Heart left ventricle (tissue), 16 donors: ENCODE measurements at regions of chr1 and their contacts with region 1.

Region 1: DNA sequence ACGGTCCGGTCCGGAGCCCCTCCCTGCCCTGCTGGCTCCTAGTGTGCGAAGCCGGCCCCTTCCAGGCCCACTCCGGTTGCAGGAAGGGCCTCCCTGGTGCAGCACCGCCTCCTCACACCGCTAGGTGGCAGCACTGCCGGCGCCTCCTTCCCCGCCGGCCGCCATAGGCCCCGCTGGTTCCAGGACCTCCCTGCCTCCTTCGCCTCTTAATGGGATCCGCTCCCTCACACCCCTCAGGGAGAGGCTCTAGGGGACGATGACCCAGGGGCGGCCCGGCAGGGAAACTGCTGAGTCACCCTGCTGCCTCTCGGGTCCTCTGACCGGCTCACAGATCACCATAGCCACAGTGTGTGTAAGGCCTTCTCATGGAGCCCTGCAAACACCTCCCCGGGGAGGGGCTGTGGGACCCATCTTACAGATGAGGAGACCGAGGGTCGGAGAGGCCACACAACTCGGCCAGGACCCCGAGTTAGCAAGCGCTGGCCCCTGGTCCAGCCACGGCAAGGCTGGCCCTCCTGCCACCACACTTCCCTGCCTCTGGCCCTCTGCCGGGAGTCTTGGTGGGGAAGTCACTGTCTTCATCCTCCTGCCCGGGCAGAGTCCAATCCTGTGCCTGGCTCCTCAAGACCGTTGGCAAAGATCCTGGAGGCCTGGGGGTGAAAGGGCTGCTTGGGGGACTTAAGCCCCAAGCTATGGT is 1.6 kb upstream of the AJAP1 start:
- DNase-seq: peak; percentile 33 to 80 (median 44)
- ATAC-seq: peak in 3 of 4 donors; percentile 78 to 81 (median 80)
- H3K4me3 ChIP-seq: no peak overlapping the region
- H3K27ac ChIP-seq: no peak overlapping the region
- H3K4me1 ChIP-seq: peaks cover 0 to 31% (median 5%) of the 10 kb centered on the region in 12 donors
- H3K27me3 ChIP-seq: peaks cover 22 to 92% (median 44%) of the 10 kb centered on the region in 9 donors
- CTCF ChIP-seq: peak; percentile 87 to 98 (median 96)
- POLR2A ChIP-seq: no peak

Region 2: GRCh38 chr1:3910857-3911845 is 741.6 kb before region 1 on chr1:
- intact Hi-C with region 1: loop called in 3 of 10 experiments (anchors 5 to 10 kb)
- DNase-seq: peak in 4 of 5 donors; percentile 62 to 83 (median 64)
- ATAC-seq: peak in 3 of 4 donors; percentile 66 to 83 (median 77)
- H3K4me3 ChIP-seq: no peak overlapping the region
- H3K27ac ChIP-seq: no peak overlapping the region
- H3K4me1 ChIP-seq: peaks cover 0 to 7% (median 0%) of the 10 kb centered on the region in 12 donors
- H3K27me3 ChIP-seq: peaks cover 0 to 46% (median 15%) of the 10 kb centered on the region in 9 donors
- CTCF ChIP-seq: peak; percentile 44 to 76 (median 62)
- POLR2A ChIP-seq: no peak

Region 3: GRCh38 chr1:4494558-4494957 is 158.2 kb before region 1 on chr1:
- intact Hi-C with region 1: loop called in 1 of 10 experiments (anchors 10 kb)
- DNase-seq: peak in 1 of 5 donors; percentile 47
- ATAC-seq: peak; percentile 32 to 78 (median 72)
- H3K4me3 ChIP-seq: no peak overlapping the region
- H3K27ac ChIP-seq: no peak overlapping the region
- H3K4me1 ChIP-seq: no peaks in the 10 kb centered on the region
- H3K27me3 ChIP-seq: peaks cover 0 to 20% (median 0%) of the 10 kb centered on the region in 9 donors
- CTCF ChIP-seq: peak in 10 of 12 donors; percentile 12 to 50 (median 31)
- POLR2A ChIP-seq: no peak

Region 4: GRCh38 chr1:5514519-5515183 is 861.9 kb after region 1 on chr1:
- intact Hi-C with region 1: loop called in 1 of 10 experiments (anchors 10 kb)
- DNase-seq: peak; percentile 45 to 82 (median 56)
- ATAC-seq: peak in 3 of 4 donors; percentile 64 to 73 (median 64)
- H3K4me3 ChIP-seq: no peak overlapping the region
- H3K27ac ChIP-seq: no peak overlapping the region
- H3K4me1 ChIP-seq: no peaks in the 10 kb centered on the region
- H3K27me3 ChIP-seq: peaks cover 0 to 38% (median 7%) of the 10 kb centered on the region in 9 donors
- CTCF ChIP-seq: peak; percentile 99 to 100 (median 100)
- POLR2A ChIP-seq: no peak

Region 5: DNA sequence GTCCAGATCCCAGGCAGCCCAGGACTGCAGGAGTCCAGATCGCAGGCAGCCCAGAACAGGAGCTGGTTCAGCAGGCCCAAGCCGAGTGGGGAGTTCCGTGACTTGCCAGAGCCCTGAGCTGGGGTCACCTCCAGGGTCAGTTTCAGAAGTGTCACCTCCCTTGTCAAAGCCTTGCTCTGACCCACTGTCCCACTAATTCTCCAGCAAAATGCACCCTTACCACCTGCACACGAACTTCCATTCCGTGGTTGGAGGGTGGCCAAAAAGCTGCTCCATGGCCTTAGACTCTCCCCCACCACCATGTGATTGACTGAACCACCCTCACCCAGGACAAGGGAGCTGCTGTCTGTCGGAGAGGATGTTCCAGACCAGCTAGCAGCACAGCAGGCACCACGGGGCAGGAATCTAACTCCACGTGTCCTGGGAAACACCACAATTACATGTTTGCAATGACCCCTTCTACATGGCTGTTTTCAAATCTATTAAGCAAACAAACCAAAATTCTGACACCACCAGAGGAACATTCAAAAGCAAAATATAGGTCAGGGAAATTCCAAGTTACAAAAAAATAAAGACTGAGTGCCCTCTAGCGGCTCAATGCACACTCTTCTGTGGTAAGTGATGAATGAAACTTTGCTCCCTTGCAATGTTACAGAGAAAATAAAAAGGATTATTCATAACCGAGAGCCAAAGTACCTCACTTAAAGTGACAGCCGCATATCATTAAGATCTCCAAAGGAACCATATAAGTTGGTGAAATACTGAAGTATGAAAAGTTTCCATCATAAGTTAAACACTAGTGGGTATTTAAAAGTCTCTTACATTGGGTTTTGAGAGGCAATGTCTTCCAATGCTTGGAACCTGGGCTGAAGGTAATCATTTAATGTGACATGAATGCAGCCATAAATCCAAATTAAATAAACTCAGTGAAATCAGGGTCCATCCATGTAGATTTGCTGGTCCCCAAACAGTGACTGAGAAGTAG is 1263.1 kb after region 1 on chr1:
- intact Hi-C with region 1: loop called in 2 of 10 experiments (anchors 5 to 10 kb)
- DNase-seq: no peak
- ATAC-seq: peak in 3 of 4 donors; percentile 39 to 52 (median 46)
- H3K4me3 ChIP-seq: no peak overlapping the region
- H3K27ac ChIP-seq: no peak overlapping the region
- H3K4me1 ChIP-seq: peaks cover 0 to 6% (median 0%) of the 10 kb centered on the region in 12 donors
- H3K27me3 ChIP-seq: no peaks in the 10 kb centered on the region
- CTCF ChIP-seq: peak; percentile 37 to 76 (median 56)
- POLR2A ChIP-seq: no peak

Region 6: DNA sequence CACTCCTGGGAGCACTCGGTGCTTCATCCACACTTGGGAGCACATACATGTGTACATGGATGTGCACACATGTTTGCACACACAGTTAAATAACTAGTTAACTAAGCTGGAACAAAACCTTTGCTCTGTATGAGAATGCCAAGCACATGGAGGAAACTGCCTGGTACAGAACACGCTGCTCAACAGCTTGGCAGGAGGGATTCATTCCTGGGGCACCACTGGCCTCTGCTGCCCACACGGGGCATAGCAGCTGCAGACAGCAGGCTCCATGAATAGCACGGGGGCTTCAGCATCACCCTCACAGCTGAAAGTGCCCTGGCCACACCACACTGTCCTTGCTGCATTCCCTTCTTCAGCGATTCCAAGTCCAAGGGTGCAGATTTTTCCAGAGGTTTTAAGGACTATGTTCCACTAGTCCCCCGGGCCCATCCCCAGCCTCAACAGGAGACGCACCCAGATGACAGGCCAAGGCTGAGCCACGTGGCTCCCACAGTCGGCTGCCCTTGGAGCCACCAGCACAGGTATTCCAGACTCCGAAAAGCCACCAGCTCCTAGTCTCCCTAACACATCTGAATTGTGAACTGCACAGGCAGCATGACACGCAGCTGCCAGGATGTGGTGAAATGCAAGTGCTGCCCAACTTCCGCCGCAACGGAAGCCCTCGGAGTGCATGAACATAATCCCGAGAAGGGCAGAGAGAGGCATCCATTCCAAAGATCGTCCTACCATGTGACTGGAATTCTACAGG is 1322.5 kb after region 1 on chr1:
- intact Hi-C with region 1: loop called in 1 of 10 experiments (anchors 10 kb)
- DNase-seq: peak in 2 of 5 donors; percentile 55 to 76
- ATAC-seq: peak; percentile 71 to 91 (median 89)
- H3K4me3 ChIP-seq: no peak overlapping the region
- H3K27ac ChIP-seq: no peak overlapping the region
- H3K4me1 ChIP-seq: peaks cover 0 to 5% (median 0%) of the 10 kb centered on the region in 12 donors
- H3K27me3 ChIP-seq: no peaks in the 10 kb centered on the region
- CTCF ChIP-seq: peak; percentile 42 to 70 (median 60)
- POLR2A ChIP-seq: no peak